Right lobe of liver (tissue), 6 donors: ENCODE measurements at regions of chr5 and their contacts with region 1.

Region 1: GRCh38 chr5:64784451-64785025 is 15.8 kb downstream of the CWC27 start:
- DNase-seq: peak; percentile 46 to 69 (median 53)
- ATAC-seq: peak; percentile 72 to 83 (median 80)
- H3K4me3 ChIP-seq: no peak overlapping the region
- H3K27ac ChIP-seq: no peak overlapping the region
- H3K4me1 ChIP-seq: no peaks in the 10 kb centered on the region
- H3K27me3 ChIP-seq: no peaks in the 10 kb centered on the region
- CTCF ChIP-seq: peak; percentile 84 to 88 (median 85)
- POLR2A ChIP-seq: no peak

Region 2: DNA sequence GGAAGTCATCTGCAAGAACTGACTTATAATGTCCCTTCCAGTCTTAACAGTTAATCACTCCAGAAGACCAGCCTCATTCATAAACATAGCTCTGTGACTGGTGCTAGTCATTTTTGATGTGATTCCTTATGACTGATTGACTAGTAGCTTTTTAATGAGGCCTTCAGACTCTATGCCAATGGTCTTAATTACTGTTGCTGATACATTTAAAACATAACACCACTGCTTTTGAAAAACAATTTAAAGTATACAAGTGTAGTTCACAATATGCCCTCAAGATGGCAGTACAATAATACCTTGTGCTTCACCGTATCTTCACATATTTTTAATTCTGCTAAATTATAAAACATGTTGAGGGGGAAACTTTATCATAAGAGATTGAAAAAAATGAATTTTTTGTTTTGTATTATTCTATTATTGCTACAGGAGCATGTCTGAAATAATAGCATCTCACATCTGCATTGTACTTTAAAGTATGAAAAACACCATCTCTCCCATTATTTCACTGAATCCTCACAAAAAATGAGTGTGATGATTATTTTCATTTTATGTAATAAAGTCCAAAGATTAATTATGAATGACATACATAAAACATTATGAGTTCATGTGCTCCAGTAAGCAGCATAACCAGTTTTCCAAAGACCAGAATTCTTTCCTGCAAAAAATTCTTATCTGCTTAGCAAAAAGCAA is 149.4 kb before region 1 on chr5:
- intact Hi-C with region 1: loop called (anchors 5 to 10 kb)
- DNase-seq: no peak
- ATAC-seq: peak; percentile 66 to 81 (median 74)
- H3K4me3 ChIP-seq: no peak overlapping the region
- H3K27ac ChIP-seq: no peak overlapping the region
- H3K4me1 ChIP-seq: no peaks in the 10 kb centered on the region
- H3K27me3 ChIP-seq: no peaks in the 10 kb centered on the region
- CTCF ChIP-seq: peak; percentile 75 to 84 (median 78)
- POLR2A ChIP-seq: no peak